Spleen (tissue), 13 donors: ENCODE measurements at regions of chr15 and their contacts with region 1.

Region 1: GRCh38 chr15:29089731-29090616 is 179.6 kb downstream of the NSMCE3 start:
- DNase-seq: peak; percentile 75
- H3K4me3 ChIP-seq: peak overlapping the region in 2 of 8 donors; percentile 16 to 36
- H3K27ac ChIP-seq: peak overlapping the region in 6 of 8 donors; percentile 20 to 76 (median 45)
- H3K4me1 ChIP-seq: peaks cover 0 to 27% (median 10%) of the 10 kb centered on the region in 6 donors
- H3K27me3 ChIP-seq: peaks cover 0 to 8% (median 0%) of the 10 kb centered on the region in 7 donors
- CTCF ChIP-seq: peak in 4 of 11 experiments; percentile 26 to 42 (median 30)
- POLR2A ChIP-seq: no peak

Region 2: GRCh38 chr15:28984421-28985315 is 105.3 kb before region 1 on chr15:
- intact Hi-C with region 1: loop called (anchors 10 kb)
- DNase-seq: no peak
- H3K4me3 ChIP-seq: no peak overlapping the region
- H3K27ac ChIP-seq: no peak overlapping the region
- H3K4me1 ChIP-seq: peaks cover 0 to 32% (median 11%) of the 10 kb centered on the region in 6 donors
- H3K27me3 ChIP-seq: no peaks in the 10 kb centered on the region
- CTCF ChIP-seq: no peak
- POLR2A ChIP-seq: no peak

Region 3: GRCh38 chr15:29021891-29022290 is 68.1 kb before region 1 on chr15:
- intact Hi-C with region 1: loop called (anchors 10 kb)
- DNase-seq: no peak
- H3K4me3 ChIP-seq: no peak overlapping the region
- H3K27ac ChIP-seq: no peak overlapping the region
- H3K4me1 ChIP-seq: peaks cover 0 to 15% (median 3%) of the 10 kb centered on the region in 6 donors
- H3K27me3 ChIP-seq: no peaks in the 10 kb centered on the region
- CTCF ChIP-seq: no peak
- POLR2A ChIP-seq: no peak